Activated T-helper 2 cell treated with anti-CD3 and anti-CD28 coated beads, Interferon-gamma antibody, Interleukin-2, Interleukin-4, amounts not matched to agents 10 μg/mL and 5 μg/mL and 100 μg/mL, durations not matched to agents 14 hours and 24 hours and 36 hours (primary cell): ENCODE measurements at regions of chr13 and their contacts with region 1.

Region 1: GRCh38 chr13:79501538-79502232 is 20.7 kb downstream of the NDFIP2 start:
- DNase-seq: no peak
- H3K4me3 Mint-ChIP-seq: peak overlapping the region; percentile 43
- H3K27ac Mint-ChIP-seq: peak overlapping the region; percentile 80
- H3K4me1 Mint-ChIP-seq: peaks cover 87% of the 10 kb centered on the region
- H3K27me3 Mint-ChIP-seq: no peaks in the 10 kb centered on the region

Region 2: GRCh38 chr13:79401259-79402070 is 100.2 kb before region 1 on chr13:
- intact Hi-C with region 1: no loop called
- DNase-seq: no peak
- H3K4me3 Mint-ChIP-seq: peak overlapping the region; percentile 27
- H3K27ac Mint-ChIP-seq: peak overlapping the region; percentile 46
- H3K4me1 Mint-ChIP-seq: peaks cover 48% of the 10 kb centered on the region
- H3K27me3 Mint-ChIP-seq: no peaks in the 10 kb centered on the region

Region 3: DNA sequence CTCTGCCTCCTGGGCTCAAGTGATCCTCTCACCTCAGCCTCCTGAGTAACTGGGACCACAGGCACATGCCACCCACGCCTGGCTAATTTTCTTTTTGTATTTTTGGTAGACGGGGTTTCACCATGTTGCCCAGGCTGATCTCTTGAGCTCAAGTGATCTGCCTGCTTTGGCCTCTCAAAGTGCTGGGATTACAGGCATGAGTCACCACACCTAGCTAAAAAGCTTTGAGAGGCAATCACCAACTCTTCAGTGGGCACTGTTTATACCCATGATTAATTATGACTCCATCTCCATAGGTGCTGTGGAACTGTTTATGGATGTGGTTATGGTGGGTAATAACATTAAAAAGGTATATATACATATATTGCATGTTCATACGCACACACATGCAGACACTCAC is 88.2 kb before region 1 on chr13:
- intact Hi-C with region 1: no loop called
- DNase-seq: no peak
- H3K4me3 Mint-ChIP-seq: no peak overlapping the region
- H3K27ac Mint-ChIP-seq: no peak overlapping the region
- H3K4me1 Mint-ChIP-seq: peaks cover 17% of the 10 kb centered on the region
- H3K27me3 Mint-ChIP-seq: no peaks in the 10 kb centered on the region

Region 4: GRCh38 chr13:79486433-79487188 is 15.1 kb before region 1 on chr13:
- intact Hi-C with region 1: loop called (anchors 1 kb)
- DNase-seq: no peak
- H3K4me3 Mint-ChIP-seq: peak overlapping the region; percentile 87
- H3K27ac Mint-ChIP-seq: peak overlapping the region; percentile 87
- H3K4me1 Mint-ChIP-seq: peaks cover 73% of the 10 kb centered on the region
- H3K27me3 Mint-ChIP-seq: no peaks in the 10 kb centered on the region

Region 5: GRCh38 chr13:79512950-79513349 is 11.3 kb after region 1 on chr13:
- intact Hi-C with region 1: loop called (anchors 1 kb)
- DNase-seq: no peak
- H3K4me3 Mint-ChIP-seq: peak overlapping the region; percentile 47
- H3K27ac Mint-ChIP-seq: peak overlapping the region; percentile 85
- H3K4me1 Mint-ChIP-seq: peaks cover 95% of the 10 kb centered on the region
- H3K27me3 Mint-ChIP-seq: no peaks in the 10 kb centered on the region